MCF 10A (cell line): ENCODE measurements at regions of chr7 and their contacts with region 1.

Region 1: DNA sequence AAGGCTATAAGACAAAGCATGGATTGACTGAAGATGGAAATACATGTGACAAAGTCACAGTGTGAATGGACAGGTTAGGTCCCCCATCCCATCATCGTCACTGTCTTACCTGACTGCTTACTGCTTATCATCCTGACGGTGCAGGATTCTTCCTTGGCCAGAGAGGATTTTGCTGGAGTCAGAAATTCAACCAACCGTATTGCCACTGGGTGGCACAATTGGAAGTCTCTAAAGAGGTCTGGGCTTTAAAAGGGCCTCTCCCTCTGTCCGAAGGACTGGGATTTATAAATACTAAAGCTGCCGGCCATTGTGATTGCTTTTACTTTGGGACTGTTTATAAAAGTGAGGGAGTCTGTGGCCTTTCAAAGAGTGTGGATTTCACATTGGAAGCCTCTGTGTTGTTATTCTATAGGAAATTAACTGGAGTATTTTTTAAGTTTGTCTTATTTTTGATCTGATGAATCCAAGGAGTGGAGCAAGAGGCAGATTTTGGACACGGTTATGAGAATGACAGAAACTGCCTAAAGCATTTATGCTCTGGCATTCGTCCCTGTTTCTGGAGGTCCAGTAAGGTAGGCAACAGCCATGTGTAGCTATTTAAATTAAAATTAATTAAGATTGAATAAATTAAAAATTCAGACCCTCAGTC is 113.3 kb upstream of the CREB5 start:
- DNase-seq: peak; percentile 78
- H3K4me3 Mint-ChIP-seq: no peak overlapping the region
- H3K27ac Mint-ChIP-seq: no peak overlapping the region
- H3K4me1 Mint-ChIP-seq: peaks cover 9% of the 10 kb centered on the region
- H3K27me3 Mint-ChIP-seq: no peaks in the 10 kb centered on the region
- CTCF ChIP-seq: peak; percentile 48

Region 2: DNA sequence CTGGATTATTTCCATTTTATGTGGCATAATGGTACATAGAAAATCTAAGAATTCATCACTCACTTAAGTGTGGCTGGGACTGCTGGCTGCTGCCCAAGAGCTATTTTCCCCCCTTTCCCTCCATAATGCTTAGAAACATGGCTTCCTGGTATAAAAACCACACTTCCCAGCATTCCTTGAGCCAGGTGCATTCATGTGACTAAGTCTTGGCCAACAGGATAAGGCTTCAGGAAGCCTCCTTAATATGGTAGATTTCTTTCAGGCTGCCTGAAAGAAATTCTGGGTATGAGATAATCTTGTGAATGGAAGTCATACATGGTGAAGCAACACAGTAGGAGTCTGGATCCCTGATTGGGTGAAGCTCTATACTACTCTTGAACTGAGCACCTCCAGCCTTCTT is 296.4 kb before region 1 on chr7:
- CTCF ChIA-PET with region 1: no interaction called
- POLR2A ChIA-PET with region 1: no interaction called
- intact Hi-C with region 1: no loop called
- DNase-seq: no peak
- H3K4me3 Mint-ChIP-seq: no peak overlapping the region
- H3K27ac Mint-ChIP-seq: no peak overlapping the region
- H3K4me1 Mint-ChIP-seq: peaks cover 5% of the 10 kb centered on the region
- H3K27me3 Mint-ChIP-seq: no peaks in the 10 kb centered on the region
- CTCF ChIP-seq: no peak

Region 3: DNA sequence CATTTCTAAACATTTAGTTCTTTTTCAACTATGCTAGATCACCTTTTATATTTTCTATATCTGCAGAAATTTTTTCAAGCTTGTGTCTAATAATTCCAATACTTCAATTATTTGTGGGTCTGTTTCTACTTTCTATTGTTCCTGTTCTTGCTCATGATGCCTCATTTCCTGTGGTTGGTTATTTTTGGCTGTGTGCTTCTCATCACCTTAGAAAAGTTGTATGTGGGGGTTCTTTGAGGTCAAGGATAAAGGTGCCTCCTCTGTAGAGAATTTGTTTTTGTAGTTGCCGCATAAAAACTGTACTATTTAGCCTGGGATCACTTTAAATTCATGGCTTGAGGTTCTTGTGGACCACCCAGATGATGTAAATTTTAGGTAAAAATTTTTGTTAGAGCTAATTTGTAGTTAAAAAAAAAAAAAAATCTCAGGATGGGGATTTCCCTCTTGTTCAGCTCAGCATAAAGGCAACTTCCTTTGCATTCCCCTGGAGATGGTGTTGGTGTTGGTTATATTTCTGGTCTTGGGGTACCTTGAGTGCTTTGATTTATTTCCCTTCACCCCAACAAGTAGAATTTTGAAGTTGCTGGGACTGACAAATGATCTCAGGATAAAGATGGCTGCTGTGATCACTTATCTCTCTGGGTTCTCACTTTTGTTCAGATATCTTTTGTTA is 91.4 kb before region 1 on chr7:
- CTCF ChIA-PET with region 1: no interaction called
- POLR2A ChIA-PET with region 1: no interaction called
- intact Hi-C with region 1: no loop called
- DNase-seq: peak; percentile 53
- H3K4me3 Mint-ChIP-seq: no peak overlapping the region
- H3K27ac Mint-ChIP-seq: no peak overlapping the region
- H3K4me1 Mint-ChIP-seq: peaks cover 5% of the 10 kb centered on the region
- H3K27me3 Mint-ChIP-seq: no peaks in the 10 kb centered on the region
- CTCF ChIP-seq: no peak

Region 4: GRCh38 chr7:28354601-28355402 is 55.8 kb after region 1 on chr7:
- CTCF ChIA-PET with region 1: interaction called, 9 read pairs
- POLR2A ChIA-PET with region 1: interaction called, 23 read pairs
- intact Hi-C with region 1: loop called (anchors 2 kb)
- DNase-seq: peak; percentile 99
- H3K4me3 Mint-ChIP-seq: no peak overlapping the region
- H3K27ac Mint-ChIP-seq: peak overlapping the region; percentile 74
- H3K4me1 Mint-ChIP-seq: peaks cover 44% of the 10 kb centered on the region
- H3K27me3 Mint-ChIP-seq: no peaks in the 10 kb centered on the region
- CTCF ChIP-seq: no peak

Region 5: DNA sequence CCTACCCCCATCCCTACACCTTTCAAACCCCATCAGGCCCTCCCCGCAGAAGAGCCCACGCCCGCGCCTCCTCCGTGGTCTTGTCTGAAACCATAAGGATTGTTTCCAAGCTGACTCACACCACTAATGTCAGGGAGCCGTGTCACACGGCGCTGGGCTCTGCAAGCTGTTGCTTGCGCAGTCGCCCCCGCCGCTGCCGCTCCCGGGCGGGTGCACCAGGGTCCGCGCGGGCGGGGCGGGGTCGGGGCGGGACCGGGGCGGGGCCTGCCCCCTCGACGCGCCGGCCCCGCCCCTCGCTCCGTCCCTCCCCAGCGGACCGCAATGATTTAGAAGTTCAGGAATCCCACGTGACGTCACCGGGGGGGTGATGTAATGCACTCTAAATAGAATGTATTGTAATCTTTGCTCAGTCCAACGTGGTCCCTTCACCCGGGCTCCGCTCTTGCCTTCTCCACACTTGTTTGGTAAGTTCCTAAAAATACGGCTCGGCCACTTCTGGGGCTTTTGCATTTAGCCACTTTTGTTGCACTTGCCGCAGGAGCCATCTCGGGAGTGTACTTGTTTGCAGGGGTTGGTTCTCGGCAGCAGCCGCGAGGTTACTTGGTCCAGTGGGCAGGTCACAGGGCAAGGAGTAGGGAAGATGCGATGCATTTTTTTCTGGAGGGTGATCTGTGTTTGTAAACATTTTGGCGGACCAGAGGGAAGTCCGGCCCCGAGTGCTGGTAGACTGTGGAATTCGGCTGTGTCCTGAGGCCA is 110.1 kb after region 1 on chr7:
- CTCF ChIA-PET with region 1: interaction called, 5 read pairs
- POLR2A ChIA-PET with region 1: interaction called, 5 read pairs
- intact Hi-C with region 1: loop called (anchors 5 kb)
- DNase-seq: peak; percentile 95
- H3K4me3 Mint-ChIP-seq: peak overlapping the region; percentile 79
- H3K27ac Mint-ChIP-seq: peak overlapping the region; percentile 90
- H3K4me1 Mint-ChIP-seq: peaks cover 35% of the 10 kb centered on the region
- H3K27me3 Mint-ChIP-seq: peaks cover 13% of the 10 kb centered on the region
- CTCF ChIP-seq: no peak

Region 6: GRCh38 chr7:28626624-28627262 is 327.7 kb after region 1 on chr7:
- CTCF ChIA-PET with region 1: interaction called, 20 read pairs
- POLR2A ChIA-PET with region 1: no interaction called
- intact Hi-C with region 1: loop called (anchors 1 kb)
- DNase-seq: peak; percentile 60
- H3K4me3 Mint-ChIP-seq: no peak overlapping the region
- H3K27ac Mint-ChIP-seq: no peak overlapping the region
- H3K4me1 Mint-ChIP-seq: peaks cover 5% of the 10 kb centered on the region
- H3K27me3 Mint-ChIP-seq: no peaks in the 10 kb centered on the region
- CTCF ChIP-seq: peak; percentile 67

Region 7: GRCh38 chr7:29105752-29106668 is 807.0 kb after region 1 on chr7:
- CTCF ChIA-PET with region 1: no interaction called
- POLR2A ChIA-PET with region 1: no interaction called
- intact Hi-C with region 1: loop called (anchors 5 kb)
- DNase-seq: peak; percentile 72
- H3K4me3 Mint-ChIP-seq: no peak overlapping the region
- H3K27ac Mint-ChIP-seq: peak overlapping the region; percentile 60
- H3K4me1 Mint-ChIP-seq: peaks cover 47% of the 10 kb centered on the region
- H3K27me3 Mint-ChIP-seq: no peaks in the 10 kb centered on the region
- CTCF ChIP-seq: peak; percentile 80

Region 8: GRCh38 chr7:29289156-29290021 is 990.4 kb after region 1 on chr7:
- CTCF ChIA-PET with region 1: no interaction called
- POLR2A ChIA-PET with region 1: no interaction called
- intact Hi-C with region 1: no loop called
- DNase-seq: peak; percentile 41
- H3K4me3 Mint-ChIP-seq: no peak overlapping the region
- H3K27ac Mint-ChIP-seq: no peak overlapping the region
- H3K4me1 Mint-ChIP-seq: peaks cover 47% of the 10 kb centered on the region
- H3K27me3 Mint-ChIP-seq: no peaks in the 10 kb centered on the region
- CTCF ChIP-seq: no peak